Caco-2 (cell line): ENCODE measurements at regions of chr5 and their contacts with region 1.

Region 1: GRCh38 chr5:80407735-80408482 is at the start of gene ZFYVE16:
- DNase-seq: peak; percentile 98 to 99
- H3K4me3 ChIP-seq: peak within 1 kb of the TSS; percentile 57
- H3K4me3 Mint-ChIP-seq: peak within 1 kb of the TSS; percentile 75
- H3K27ac Mint-ChIP-seq: peak within 1 kb of the TSS; percentile 66
- H3K4me1 ChIP-seq: peaks cover 4% of the 10 kb centered on the region; the same call in 1 of the 2 replicates
- H3K4me1 Mint-ChIP-seq: peaks cover 7% of the 10 kb centered on the region
- H3K27me3 ChIP-seq: no peaks in the 10 kb centered on the region
- H3K27me3 Mint-ChIP-seq: no peaks in the 10 kb centered on the region
- CTCF ChIP-seq: peak; percentile 39 to 40
- total RNA-seq, gene ZFYVE16: 46.9 and 50.2 TPM in 2 replicates

Region 2: GRCh38 chr5:79235634-79236363 is 1172.1 kb before region 1 on chr5 and contains the start of gene JMY:
- CTCF ChIA-PET with region 1: no interaction called
- POLR2A ChIA-PET with region 1: no interaction called
- intact Hi-C with region 1: loop called (anchors 5 kb)
- DNase-seq: peak; percentile 85 to 88
- H3K4me3 ChIP-seq: peak within 1 kb of the TSS; percentile 70
- H3K4me3 Mint-ChIP-seq: peak within 1 kb of the TSS; percentile 78
- H3K27ac Mint-ChIP-seq: peak within 1 kb of the TSS; percentile 97
- H3K4me1 ChIP-seq: peaks cover 4% of the 10 kb centered on the region; the same call in 1 of the 2 replicates
- H3K4me1 Mint-ChIP-seq: no peaks in the 10 kb centered on the region
- H3K27me3 ChIP-seq: no peaks in the 10 kb centered on the region
- H3K27me3 Mint-ChIP-seq: no peaks in the 10 kb centered on the region
- CTCF ChIP-seq: no peak
- total RNA-seq, gene JMY: 10.5 and 11.3 TPM in 2 replicates

Region 3: DNA sequence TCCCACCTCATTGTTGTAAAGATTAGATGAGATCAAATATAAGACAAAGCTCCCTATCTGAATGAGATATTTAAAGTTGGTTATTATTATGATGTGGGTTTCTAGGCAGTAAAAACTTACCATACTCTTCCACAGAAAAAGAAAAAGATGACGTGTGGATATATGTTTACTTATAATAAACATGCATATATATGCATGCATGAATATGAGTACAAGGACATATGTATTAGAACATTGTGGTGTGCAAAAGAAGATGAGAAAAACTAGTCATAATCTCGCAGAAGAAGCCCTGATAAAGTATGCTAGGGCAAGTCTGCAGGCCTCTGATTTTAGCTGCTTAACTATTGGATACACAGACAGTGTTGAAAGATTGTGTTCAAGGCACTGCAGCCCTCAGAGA is 382.8 kb before region 1 on chr5:
- CTCF ChIA-PET with region 1: no interaction called
- POLR2A ChIA-PET with region 1: interaction called, 10 read pairs
- intact Hi-C with region 1: no loop called
- DNase-seq: no peak
- H3K4me3 ChIP-seq: no peak overlapping the region
- H3K4me3 Mint-ChIP-seq: no peak overlapping the region
- H3K27ac Mint-ChIP-seq: no peak overlapping the region
- H3K4me1 ChIP-seq: no peaks in the 10 kb centered on the region
- H3K4me1 Mint-ChIP-seq: no peaks in the 10 kb centered on the region
- H3K27me3 ChIP-seq: no peaks in the 10 kb centered on the region; the same call in 1 of the 2 replicates
- H3K27me3 Mint-ChIP-seq: peaks cover 12% of the 10 kb centered on the region
- CTCF ChIP-seq: no peak

Region 4: DNA sequence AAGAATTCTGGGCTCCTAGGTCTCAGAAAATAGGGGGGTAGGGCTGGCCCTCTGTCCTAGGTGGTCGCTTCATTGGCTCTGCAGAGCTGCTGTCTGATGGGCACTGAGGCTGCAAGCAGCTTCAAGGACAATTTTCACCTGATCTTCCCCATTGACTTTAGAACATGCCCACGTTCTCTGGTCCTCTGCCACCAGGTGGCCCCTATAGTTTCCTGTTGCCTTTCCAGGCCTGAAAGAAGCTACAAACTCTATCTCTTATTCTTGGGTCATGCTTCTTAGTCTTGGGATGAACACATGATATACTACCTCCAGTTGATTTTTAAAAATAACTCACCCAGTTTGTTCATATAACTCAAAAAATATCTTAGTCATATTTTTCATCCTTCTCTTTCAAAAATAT is 61.9 kb before region 1 on chr5:
- CTCF ChIA-PET with region 1: no interaction called
- POLR2A ChIA-PET with region 1: interaction called, 4 read pairs
- intact Hi-C with region 1: loop called (anchors 1 kb)
- DNase-seq: peak; percentile 59 to 61
- H3K4me3 ChIP-seq: no peak overlapping the region
- H3K4me3 Mint-ChIP-seq: no peak overlapping the region
- H3K27ac Mint-ChIP-seq: no peak overlapping the region
- H3K4me1 ChIP-seq: no peaks in the 10 kb centered on the region
- H3K4me1 Mint-ChIP-seq: no peaks in the 10 kb centered on the region
- H3K27me3 ChIP-seq: no peaks in the 10 kb centered on the region
- H3K27me3 Mint-ChIP-seq: no peaks in the 10 kb centered on the region
- CTCF ChIP-seq: peak; percentile 61 to 83